ENCODE measurements at regions of chr2 and their contacts with region 1.

Region 1: GRCh38 chr2:54428108-54428831 is 27.9 kb upstream of the SPTBN1 start:
- DNase-seq: no peak
- ATAC-seq: no peak
- H3K4me3 ChIP-seq: no peak overlapping the region
- H3K4me3 Mint-ChIP-seq: no peak overlapping the region
- H3K27ac ChIP-seq: no peak overlapping the region
- H3K27ac Mint-ChIP-seq: no peak overlapping the region
- H3K4me1 ChIP-seq: peaks cover 4% of the 10 kb centered on the region
- H3K4me1 Mint-ChIP-seq: peaks cover 3% of the 10 kb centered on the region
- H3K27me3 ChIP-seq: no peaks in the 10 kb centered on the region
- H3K27me3 Mint-ChIP-seq: no peaks in the 10 kb centered on the region
- CTCF ChIP-seq: no peak

Region 2: DNA sequence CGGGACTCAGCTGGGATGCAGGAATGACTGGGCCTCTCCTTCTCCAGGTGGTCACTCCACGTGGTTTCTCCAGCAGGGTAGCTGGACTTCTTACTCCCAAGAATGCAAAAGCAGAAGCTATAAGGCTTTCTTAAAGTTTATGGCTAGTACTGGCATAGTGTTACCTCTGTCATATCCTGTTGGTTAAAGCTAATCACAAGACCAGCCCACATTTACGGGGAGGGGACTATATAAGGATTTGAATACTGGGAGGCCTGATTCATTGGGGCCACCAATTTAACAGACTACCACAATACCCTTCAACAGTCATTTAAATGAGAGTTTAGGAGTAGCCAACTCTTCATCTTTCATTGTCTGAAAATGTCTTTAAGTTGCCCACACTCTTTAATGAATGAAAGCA is 77.8 kb before region 1 on chr2:
- CTCF ChIA-PET with region 1: no interaction called
- POLR2A ChIA-PET with region 1: no interaction called
- intact Hi-C with region 1: loop called in 1 of 2 experiments (anchors 5 kb)
- DNase-seq: no peak
- ATAC-seq: no peak
- H3K4me3 ChIP-seq: no peak overlapping the region
- H3K4me3 Mint-ChIP-seq: no peak overlapping the region
- H3K27ac ChIP-seq: no peak overlapping the region
- H3K27ac Mint-ChIP-seq: no peak overlapping the region
- H3K4me1 ChIP-seq: no peaks in the 10 kb centered on the region
- H3K4me1 Mint-ChIP-seq: no peaks in the 10 kb centered on the region
- H3K27me3 ChIP-seq: no peaks in the 10 kb centered on the region
- H3K27me3 Mint-ChIP-seq: peaks cover 8% of the 10 kb centered on the region
- CTCF ChIP-seq: no peak